ENCODE measurements at regions of chr11 and their contacts with region 1.

Region 1: GRCh38 chr11:62081378-62082291 is 42.2 kb upstream of the INCENP start:
- DNase-seq: peak; percentile 89
- ATAC-seq: peak; percentile 89
- H3K4me3 Mint-ChIP-seq: no peak overlapping the region
- H3K27ac Mint-ChIP-seq: no peak overlapping the region
- H3K4me1 Mint-ChIP-seq: no peaks in the 10 kb centered on the region; the same call in 1 of the 2 replicates
- H3K27me3 Mint-ChIP-seq: no peaks in the 10 kb centered on the region; the same call in 1 of the 2 replicates
- CTCF ChIP-seq: peak; percentile 84

Region 2: GRCh38 chr11:61871158-61871597 is 210.5 kb before region 1 on chr11:
- CTCF ChIA-PET with region 1: interaction called, 35 read pairs
- POLR2A ChIA-PET with region 1: no interaction called
- DNase-seq: peak; percentile 92
- ATAC-seq: peak; percentile 87
- H3K4me3 Mint-ChIP-seq: peak overlapping the region; percentile 50
- H3K27ac Mint-ChIP-seq: no peak overlapping the region
- H3K4me1 Mint-ChIP-seq: peaks cover 18% of the 10 kb centered on the region
- H3K27me3 Mint-ChIP-seq: peaks cover 9% of the 10 kb centered on the region
- CTCF ChIP-seq: peak; percentile 87

Region 3: DNA sequence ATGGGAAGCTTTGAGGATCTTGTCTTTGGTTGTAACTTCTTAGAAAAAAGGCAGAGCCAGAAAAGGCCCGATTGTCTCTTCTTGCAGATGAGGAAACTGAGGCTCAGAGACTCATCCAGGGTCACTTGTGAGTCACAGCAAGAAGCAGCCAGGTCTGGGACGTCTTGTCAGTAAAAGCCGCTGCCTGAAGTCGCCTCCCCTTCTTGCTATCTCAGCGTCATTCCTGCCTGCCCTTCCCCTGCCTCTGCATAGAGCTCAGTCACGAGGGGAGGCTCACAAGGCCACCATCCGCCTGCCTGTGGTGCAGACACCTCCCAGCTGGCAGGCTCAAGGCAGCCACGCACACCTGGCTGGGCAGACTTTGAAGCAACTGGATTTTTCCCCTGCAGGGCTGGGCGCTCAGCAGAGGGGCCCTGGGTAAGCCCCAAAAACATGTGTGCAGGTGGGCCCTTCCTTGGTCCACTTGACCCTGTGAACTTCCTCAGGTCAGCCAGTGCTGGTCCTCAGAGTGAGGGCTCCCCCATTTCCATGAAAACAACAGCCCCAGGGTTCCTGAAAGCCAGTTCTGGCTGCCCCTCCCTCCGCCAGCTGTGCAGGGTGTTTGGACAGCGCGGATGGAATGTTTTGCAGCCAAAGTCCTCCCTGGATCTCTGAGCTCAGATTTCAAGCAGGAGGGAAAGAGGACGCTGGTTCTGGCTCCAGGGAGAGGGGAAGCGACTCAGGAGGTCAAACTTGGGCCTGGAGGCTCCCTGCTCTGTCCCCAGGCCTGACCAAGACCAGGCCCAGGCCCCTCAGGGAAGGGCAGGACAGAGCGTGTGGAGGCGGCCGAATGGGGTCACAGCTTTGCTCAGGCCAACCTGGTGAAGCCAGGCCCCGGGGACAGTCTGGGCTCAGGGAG is 158.2 kb before region 1 on chr11:
- CTCF ChIA-PET with region 1: interaction called, 15 read pairs
- POLR2A ChIA-PET with region 1: no interaction called
- DNase-seq: peak; percentile 69
- ATAC-seq: peak; percentile 67
- H3K4me3 Mint-ChIP-seq: peak overlapping the region; percentile 41
- H3K27ac Mint-ChIP-seq: peak overlapping the region; percentile 94
- H3K4me1 Mint-ChIP-seq: peaks cover 42% of the 10 kb centered on the region
- H3K27me3 Mint-ChIP-seq: peaks cover 11% of the 10 kb centered on the region
- CTCF ChIP-seq: no peak

Region 4: GRCh38 chr11:61961570-61962212 is 119.9 kb before region 1 on chr11:
- CTCF ChIA-PET with region 1: interaction called, 19 read pairs
- POLR2A ChIA-PET with region 1: interaction called, 5 read pairs
- DNase-seq: no peak
- ATAC-seq: no peak; the same call in 1 of the 2 replicates
- H3K4me3 Mint-ChIP-seq: no peak overlapping the region
- H3K27ac Mint-ChIP-seq: no peak overlapping the region
- H3K4me1 Mint-ChIP-seq: peaks cover 11% of the 10 kb centered on the region; the same call in 1 of the 2 replicates
- H3K27me3 Mint-ChIP-seq: no peaks in the 10 kb centered on the region; the same call in 1 of the 2 replicates
- CTCF ChIP-seq: no peak

Region 5: DNA sequence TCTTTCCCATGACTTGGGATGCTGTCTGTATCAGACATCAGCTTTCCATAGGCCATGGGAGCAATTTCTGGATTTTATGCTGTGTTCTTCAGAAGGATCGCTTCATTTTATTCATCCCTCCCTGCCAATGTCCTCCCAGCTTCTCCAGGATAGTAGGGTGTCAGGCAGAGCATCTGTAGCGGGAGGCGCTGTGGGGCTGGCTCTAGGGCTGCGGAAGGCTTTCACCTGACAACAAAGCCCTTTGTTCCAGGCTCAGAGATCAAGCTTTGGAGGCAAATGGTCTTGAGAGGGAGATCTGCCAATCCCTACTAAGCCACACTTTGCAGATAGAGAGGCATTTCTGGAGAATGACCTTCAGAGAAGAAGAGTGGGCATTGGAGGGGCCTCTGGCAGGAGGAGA is 84.7 kb before region 1 on chr11:
- CTCF ChIA-PET with region 1: interaction called, 12 read pairs
- POLR2A ChIA-PET with region 1: no interaction called
- DNase-seq: no peak
- ATAC-seq: peak; percentile 74
- H3K4me3 Mint-ChIP-seq: no peak overlapping the region
- H3K27ac Mint-ChIP-seq: no peak overlapping the region
- H3K4me1 Mint-ChIP-seq: peaks cover 19% of the 10 kb centered on the region
- H3K27me3 Mint-ChIP-seq: peaks cover 3% of the 10 kb centered on the region; the same call in 1 of the 2 replicates
- CTCF ChIP-seq: no peak

Region 6: GRCh38 chr11:62108017-62108750 is 26.5 kb after region 1 on chr11:
- CTCF ChIA-PET with region 1: interaction called, 111 read pairs
- POLR2A ChIA-PET with region 1: interaction called, 3 read pairs
- DNase-seq: no peak
- ATAC-seq: peak; percentile 70
- H3K4me3 Mint-ChIP-seq: no peak overlapping the region
- H3K27ac Mint-ChIP-seq: no peak overlapping the region
- H3K4me1 Mint-ChIP-seq: peaks cover 14% of the 10 kb centered on the region
- H3K27me3 Mint-ChIP-seq: peaks cover 4% of the 10 kb centered on the region; the same call in 1 of the 2 replicates
- CTCF ChIP-seq: peak; percentile 62

Measured in WTC11 (cell line).